Breast epithelium (tissue), 4 donors: ENCODE measurements at regions of chr20 and their contacts with region 1.

Region 1: DNA sequence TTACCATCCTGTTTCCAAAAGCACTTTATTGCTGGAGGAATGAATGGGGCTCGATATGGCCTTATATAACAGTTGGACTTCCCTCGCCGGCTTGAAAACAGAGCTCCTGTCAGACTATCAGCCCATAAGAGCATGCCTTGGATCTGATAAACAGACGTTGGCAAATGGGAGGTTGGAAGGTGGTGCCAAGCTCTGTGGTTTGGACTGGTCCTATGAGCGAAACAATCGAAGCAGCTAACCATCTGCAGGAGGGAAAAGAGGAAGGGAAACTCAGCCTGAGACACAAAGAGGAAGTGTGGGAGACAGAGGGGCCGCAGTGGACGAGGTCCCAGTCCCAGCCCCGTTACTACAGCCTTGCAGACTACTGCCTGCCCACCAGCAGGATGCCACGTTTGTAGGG is 92.9 kb downstream of the TFAP2C start:
- DNase-seq: peak in 1 of 2 donors; percentile 82
- H3K4me3 ChIP-seq: peak overlapping the region in 1 of 3 donors; percentile 22
- H3K27ac ChIP-seq: peak overlapping the region; percentile 58 to 76
- H3K4me1 ChIP-seq: no peaks in the 10 kb centered on the region
- H3K27me3 ChIP-seq: no peaks in the 10 kb centered on the region
- CTCF ChIP-seq: no peak
- POLR2A ChIP-seq: no peak

Region 2: GRCh38 chr20:57190363-57191264 is 468.6 kb after region 1 on chr20:
- intact Hi-C with region 1: loop called (anchors 5 kb)
- DNase-seq: no peak
- H3K4me3 ChIP-seq: no peak overlapping the region
- H3K27ac ChIP-seq: no peak overlapping the region
- H3K4me1 ChIP-seq: no peaks in the 10 kb centered on the region
- H3K27me3 ChIP-seq: no peaks in the 10 kb centered on the region
- CTCF ChIP-seq: no peak
- POLR2A ChIP-seq: no peak